PC-3 (cell line): ENCODE measurements at regions of chr2 and their contacts with region 1.

Region 1: GRCh38 chr2:236998236-236998635 is 87.5 kb upstream of the COPS8 start:
- DNase-seq: peak; percentile 82
- ATAC-seq: peak; percentile 82
- H3K4me3 ChIP-seq: peak overlapping the region; percentile 54
- H3K27ac ChIP-seq: peak overlapping the region; percentile 95
- H3K4me1 ChIP-seq: peaks cover 40% of the 10 kb centered on the region
- H3K27me3 ChIP-seq: no peaks in the 10 kb centered on the region
- CTCF ChIP-seq: no peak

Region 2: DNA sequence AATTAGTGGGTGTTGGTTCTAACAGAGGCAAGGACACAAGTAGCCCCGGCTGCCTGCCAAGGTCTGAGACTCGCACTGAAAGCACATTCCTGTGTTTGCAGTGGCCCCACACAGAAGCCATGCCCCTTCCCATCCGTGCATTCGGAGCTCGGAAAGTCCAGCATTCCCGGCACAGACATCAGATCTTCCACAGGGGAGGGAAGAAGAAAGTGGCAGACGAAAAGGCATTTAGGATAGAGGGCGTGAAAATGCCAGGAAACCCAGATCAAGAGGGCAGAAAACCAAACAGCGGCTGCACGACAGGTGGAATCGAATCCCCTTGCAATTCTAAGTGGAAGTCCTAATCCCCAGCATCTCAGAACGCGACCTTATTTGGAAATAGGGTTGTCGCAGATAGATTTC is 628.6 kb before region 1 on chr2:
- CTCF ChIA-PET with region 1: no interaction called
- POLR2A ChIA-PET with region 1: interaction called, 14 read pairs
- intact Hi-C with region 1: no loop called
- DNase-seq: no peak
- ATAC-seq: no peak
- H3K4me3 ChIP-seq: no peak overlapping the region
- H3K27ac ChIP-seq: no peak overlapping the region
- H3K4me1 ChIP-seq: no peaks in the 10 kb centered on the region
- H3K27me3 ChIP-seq: peaks cover 57% of the 10 kb centered on the region
- CTCF ChIP-seq: no peak

Region 3: DNA sequence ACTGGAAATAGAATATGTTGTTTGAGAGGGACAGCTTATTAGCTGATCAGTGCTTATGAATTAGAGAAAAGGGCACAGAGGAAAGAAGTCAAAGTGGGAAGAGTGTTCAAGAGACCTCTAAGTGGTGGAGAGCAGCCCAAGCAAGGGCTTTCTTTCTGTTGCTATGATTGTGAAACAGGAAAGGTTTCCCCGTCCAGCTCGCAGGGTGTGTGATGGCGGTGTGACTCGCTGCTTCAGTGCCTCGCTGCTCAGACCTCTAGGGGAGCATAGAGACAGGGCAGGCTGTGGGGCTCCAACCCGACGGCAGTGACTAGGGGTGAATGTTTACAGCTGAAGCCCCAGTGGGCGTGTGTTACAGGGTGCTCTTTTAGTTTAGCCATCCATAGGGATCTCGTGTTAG is 79.0 kb before region 1 on chr2:
- CTCF ChIA-PET with region 1: no interaction called
- POLR2A ChIA-PET with region 1: no interaction called
- intact Hi-C with region 1: loop called (anchors 5 kb)
- DNase-seq: peak; percentile 20
- ATAC-seq: peak; percentile 31
- H3K4me3 ChIP-seq: no peak overlapping the region
- H3K27ac ChIP-seq: no peak overlapping the region
- H3K4me1 ChIP-seq: no peaks in the 10 kb centered on the region
- H3K27me3 ChIP-seq: no peaks in the 10 kb centered on the region
- CTCF ChIP-seq: no peak